ENCODE measurements at regions of chr19 and their contacts with region 1.

Region 1: GRCh38 chr19:18846862-18847548 is 15.2 kb downstream of the UPF1 start:
- DNase-seq: no peak
- ATAC-seq: peak; percentile 95
- H3K4me3 ChIP-seq: no peak overlapping the region
- H3K27ac ChIP-seq: no peak overlapping the region; the same call in 1 of the 2 replicates
- H3K4me1 ChIP-seq: 0 out of 4 replicates have a peak, but pooled peaks cover 0 to 4% of the 10 kb centered on the region in 2 experiments
- H3K27me3 ChIP-seq: no peaks in the 10 kb centered on the region
- CTCF ChIP-seq: peak; percentile 74 to 90 (median 87); a peak in 5 of 6 replicates
- POLR2A ChIP-seq: no peak
- RAD21 ChIP-seq: peak; percentile 88

Region 2: DNA sequence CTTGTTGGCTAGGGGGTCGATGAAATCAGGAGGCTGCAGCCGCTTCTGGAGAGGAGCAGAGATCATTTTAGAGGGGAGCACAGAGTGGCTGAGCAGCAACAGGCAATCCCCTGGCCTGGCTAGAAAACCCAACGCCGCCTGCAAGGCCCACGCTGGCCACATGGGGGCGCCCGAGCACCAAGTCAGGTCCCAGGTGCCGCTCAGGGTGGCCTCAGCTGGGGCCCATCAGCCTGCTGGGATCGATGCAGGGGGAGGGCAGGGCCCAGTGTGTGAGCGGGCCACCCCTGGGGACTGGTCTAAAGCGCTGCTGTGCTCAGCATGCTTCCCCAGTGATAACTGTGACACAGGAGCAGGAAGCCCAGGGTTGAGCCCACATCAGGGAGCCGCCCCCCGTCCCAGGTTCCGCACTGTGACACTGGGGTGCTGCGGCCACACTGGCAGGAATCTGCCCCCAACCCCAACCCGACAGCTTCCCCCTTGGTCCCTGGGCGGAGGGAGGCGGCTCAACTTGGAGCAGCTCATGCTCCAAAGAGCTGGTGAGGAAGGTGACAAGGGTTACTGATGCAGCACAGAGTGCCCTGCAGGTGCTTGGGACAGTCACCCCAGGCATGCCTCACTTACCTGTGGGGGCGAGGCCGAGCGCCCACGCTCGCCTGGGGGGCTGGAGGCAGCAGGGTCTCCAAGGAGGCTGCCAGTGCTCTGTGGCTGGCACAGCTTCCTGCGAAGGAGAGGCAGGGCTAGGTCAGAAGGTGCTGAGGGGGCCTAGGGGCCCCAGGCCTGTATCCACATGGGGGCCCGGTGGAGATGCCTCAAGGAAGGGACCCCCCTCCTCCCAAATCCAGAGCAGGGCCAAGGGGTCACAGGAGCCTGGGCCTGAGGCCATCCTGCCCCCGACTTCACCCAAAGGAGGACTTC is 395.8 kb before region 1 on chr19:
- CTCF ChIA-PET with region 1: interaction called, 9 read pairs
- POLR2A ChIA-PET with region 1: no interaction called
- RAD21 ChIA-PET with region 1: no interaction called
- intact Hi-C with region 1: loop called (anchors 5 kb)
- DNase-seq: no peak
- ATAC-seq: peak; percentile 91
- H3K4me3 ChIP-seq: no peak overlapping the region
- H3K27ac ChIP-seq: no peak overlapping the region; the same call in 1 of the 2 replicates
- H3K4me1 ChIP-seq: peaks cover 3 to 8% of the 10 kb centered on the region in 2 experiments; a peak in 3 of 4 replicates
- H3K27me3 ChIP-seq: no peaks in the 10 kb centered on the region
- CTCF ChIP-seq: peak; percentile 74 to 97 (median 96)
- POLR2A ChIP-seq: no peak
- RAD21 ChIP-seq: peak; percentile 88

Region 3: DNA sequence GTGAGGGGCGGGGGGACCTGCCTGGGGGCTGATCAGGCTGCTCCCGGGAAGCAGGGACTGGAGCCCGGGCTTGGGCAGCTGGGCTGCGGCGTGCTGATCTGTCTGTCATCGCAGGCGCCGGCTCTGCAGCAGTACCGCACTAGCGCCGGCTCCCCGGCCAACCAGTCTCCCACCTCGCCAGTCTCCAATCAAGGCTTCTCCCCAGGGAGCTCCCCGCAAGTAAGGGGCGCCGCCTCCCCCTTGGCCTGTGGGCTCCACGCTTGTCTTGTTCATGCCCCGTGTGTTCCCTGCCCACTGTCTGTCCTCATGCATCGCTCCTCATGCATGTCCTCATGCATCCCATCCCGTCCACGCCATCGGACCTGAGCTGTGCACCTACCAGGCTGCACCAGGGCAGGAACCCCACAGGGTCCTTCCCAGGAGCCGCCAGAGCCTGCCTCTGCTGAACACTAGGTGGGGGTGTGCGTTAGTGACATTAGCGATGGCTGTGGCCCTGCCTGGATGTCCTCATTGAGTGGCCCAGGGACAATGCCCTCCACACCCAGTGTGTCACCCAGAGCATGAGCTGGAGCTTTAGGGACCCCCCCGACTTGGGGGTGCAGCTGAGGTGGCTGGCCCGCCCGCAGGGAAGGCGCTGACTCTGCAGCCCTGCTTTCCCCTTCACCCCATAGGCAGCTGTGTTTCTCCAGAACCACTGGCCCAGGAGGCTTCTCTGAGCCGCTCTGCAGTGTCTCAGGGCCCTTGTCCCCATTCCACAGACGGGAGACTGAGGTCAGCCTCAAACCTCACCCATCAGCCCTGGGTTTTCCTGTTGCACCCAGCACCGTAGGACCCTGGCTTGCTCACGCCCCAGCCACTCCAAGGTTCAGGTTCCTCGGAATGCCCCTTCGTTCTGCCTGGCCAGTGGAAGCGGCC is 75.4 kb before region 1 on chr19:
- CTCF ChIA-PET with region 1: interaction called, 5 read pairs
- POLR2A ChIA-PET with region 1: no interaction called
- RAD21 ChIA-PET with region 1: no interaction called
- intact Hi-C with region 1: loop called (anchors 1 kb)
- DNase-seq: no peak
- ATAC-seq: peak; percentile 71
- H3K4me3 ChIP-seq: no peak overlapping the region
- H3K27ac ChIP-seq: no peak overlapping the region
- H3K4me1 ChIP-seq: peaks cover 0 to 9% of the 10 kb centered on the region in 2 experiments; a peak in 2 of 4 replicates
- H3K27me3 ChIP-seq: no peaks in the 10 kb centered on the region
- CTCF ChIP-seq: peak in 2 of 3 experiments; percentile 50 to 53; a peak in 4 of 6 replicates
- POLR2A ChIP-seq: no peak
- RAD21 ChIP-seq: peak; percentile 47

Region 4: GRCh38 chr19:18832306-18833140 is 14.5 kb before region 1 on chr19:
- CTCF ChIA-PET with region 1: interaction called, 10 read pairs
- POLR2A ChIA-PET with region 1: interaction called, 4 read pairs
- RAD21 ChIA-PET with region 1: no interaction called
- intact Hi-C with region 1: no loop called
- DNase-seq: no peak
- ATAC-seq: peak; percentile 45
- H3K4me3 ChIP-seq: peak overlapping the region; percentile 77 to 98
- H3K27ac ChIP-seq: peak overlapping the region; percentile 94
- H3K4me1 ChIP-seq: peaks cover 6 to 15% of the 10 kb centered on the region in 2 experiments
- H3K27me3 ChIP-seq: no peaks in the 10 kb centered on the region
- CTCF ChIP-seq: 0 out of 6 replicates have a peak, but pooled peaks of 2 of the 3 experiments have one; percentile 7 to 17
- POLR2A ChIP-seq: no peak
- RAD21 ChIP-seq: no peak

Region 5: DNA sequence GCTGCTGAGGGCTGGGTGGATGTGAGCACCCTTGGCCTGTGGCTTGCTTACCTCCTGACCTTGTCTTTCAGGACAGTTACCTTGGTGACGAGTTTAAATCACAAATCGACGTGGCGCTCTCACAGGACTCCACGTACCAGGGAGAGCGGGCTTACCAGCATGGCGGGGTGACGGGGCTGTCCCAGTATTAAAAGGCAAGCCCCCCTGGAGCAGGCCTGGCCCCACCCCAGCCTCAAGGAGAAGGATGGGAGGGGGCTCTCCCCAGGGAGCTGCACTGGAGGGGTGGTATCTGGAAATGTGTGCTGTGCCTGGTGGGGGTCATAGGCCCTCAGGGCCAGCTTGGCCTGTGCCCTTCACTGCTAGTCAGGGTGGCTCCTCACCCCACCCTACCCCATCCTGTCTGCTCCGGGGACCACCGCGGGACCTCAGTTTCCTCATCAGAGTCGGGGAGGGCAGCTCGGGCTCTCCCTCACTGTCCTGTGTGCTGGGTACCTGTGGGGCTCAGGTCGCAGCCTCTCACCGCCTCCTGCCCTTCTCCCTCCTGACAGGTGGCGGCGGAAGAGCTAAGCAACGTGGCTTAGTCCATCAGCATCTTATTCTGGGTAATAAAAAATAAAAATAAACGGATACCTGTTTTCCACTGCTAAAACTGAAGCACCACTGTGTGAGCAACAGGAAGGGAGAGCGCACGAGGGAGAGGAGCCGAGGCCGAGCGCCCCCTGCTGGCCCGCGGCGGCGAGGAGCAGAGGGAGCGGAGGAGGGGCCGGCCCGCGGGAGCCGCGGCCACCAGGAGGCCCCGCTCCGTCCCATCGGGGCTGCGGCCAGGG is 19.2 kb after region 1 on chr19:
- CTCF ChIA-PET with region 1: interaction called, 12 read pairs
- POLR2A ChIA-PET with region 1: no interaction called
- RAD21 ChIA-PET with region 1: no interaction called
- intact Hi-C with region 1: no loop called
- DNase-seq: no peak
- ATAC-seq: peak; percentile 89
- H3K4me3 ChIP-seq: no peak overlapping the region
- H3K27ac ChIP-seq: peak overlapping the region; percentile 24; the same call in 1 of the 2 replicates
- H3K4me1 ChIP-seq: peaks cover 0 to 2% of the 10 kb centered on the region in 2 experiments; a peak in 1 of 4 replicates
- H3K27me3 ChIP-seq: no peaks in the 10 kb centered on the region
- CTCF ChIP-seq: peak; percentile 97 to 99 (median 99)
- POLR2A ChIP-seq: no peak
- RAD21 ChIP-seq: peak; percentile 74

Measured in HCT116 (cell line).